ENCODE measurements at regions of chr9 and their contacts with region 1.

Region 1: DNA sequence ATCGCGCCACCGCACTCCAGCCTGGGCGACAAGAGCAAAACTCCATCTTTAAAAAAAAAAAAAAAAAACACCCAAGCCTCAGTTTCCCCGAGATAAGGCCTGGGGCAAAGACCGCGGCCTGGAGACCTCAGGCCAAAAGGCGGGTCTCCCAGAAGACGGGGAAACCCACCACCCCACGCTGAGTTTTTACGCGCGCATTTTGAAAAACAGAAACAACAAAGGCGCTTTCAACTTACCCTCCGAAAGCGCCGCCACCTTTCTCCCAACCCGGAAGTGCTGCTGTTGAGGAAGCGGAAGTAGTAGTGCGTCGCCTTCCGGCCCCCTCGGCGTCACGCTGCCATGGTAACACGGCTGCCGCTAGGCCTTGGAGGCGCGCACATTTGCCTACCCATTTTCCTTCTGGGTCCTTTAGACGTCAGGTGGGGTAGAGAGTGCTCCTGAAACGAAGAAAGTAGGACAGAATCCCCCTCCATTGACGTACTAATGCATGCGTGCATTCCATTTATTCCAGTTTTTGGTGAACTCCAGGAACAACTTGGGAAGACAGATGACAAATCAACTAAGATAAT is at the start of gene TTF1:
- DNase-seq: peak; percentile 97
- ATAC-seq: peak; percentile 79
- H3K4me3 Mint-ChIP-seq: peak within 1 kb of the TSS; percentile 96
- H3K27ac Mint-ChIP-seq: peak within 1 kb of the TSS; percentile 91
- H3K4me1 Mint-ChIP-seq: peaks cover 56% of the 10 kb centered on the region
- H3K27me3 Mint-ChIP-seq: peaks cover 9% of the 10 kb centered on the region
- total RNA-seq, gene TTF1: 31.9 to 33.4 TPM

Region 2: DNA sequence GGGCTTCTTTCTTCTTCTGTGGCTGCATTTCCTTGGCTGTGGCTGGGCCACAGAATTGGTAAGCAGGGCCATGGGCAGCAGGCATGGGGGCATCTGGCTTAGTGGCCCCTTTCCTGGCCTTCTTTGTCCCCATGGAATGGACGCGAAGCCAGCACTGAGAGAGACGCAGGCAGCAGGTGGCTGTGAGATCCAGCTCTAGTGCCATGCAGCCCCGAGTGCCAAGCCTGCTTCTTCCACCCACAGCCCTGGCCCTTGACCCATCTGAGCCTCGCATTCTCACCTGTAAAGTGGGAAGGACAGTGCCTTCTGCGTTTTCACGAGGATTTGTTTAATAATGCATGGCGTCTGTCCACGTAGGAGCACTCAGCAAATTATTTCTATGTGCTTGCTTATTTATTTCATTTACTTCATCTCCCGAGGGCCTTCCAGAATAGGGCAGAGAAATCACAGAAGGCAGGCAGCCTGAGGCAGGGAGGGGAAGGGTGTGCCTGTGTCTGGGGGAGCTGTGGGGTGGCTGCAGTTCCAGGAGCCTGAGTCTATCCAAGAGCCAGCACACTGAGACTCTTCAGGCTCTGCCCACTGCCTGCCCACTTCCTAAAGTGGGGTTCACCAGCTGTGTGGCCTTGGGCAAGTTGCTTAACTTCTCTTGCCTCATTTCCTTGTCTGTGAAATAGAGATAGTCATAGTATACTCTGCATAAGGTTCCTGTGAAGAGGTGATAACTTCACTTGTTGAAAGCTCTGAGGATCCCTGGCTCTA is 189.6 kb before region 1 on chr9:
- CTCF ChIA-PET with region 1: no interaction called
- POLR2A ChIA-PET with region 1: no interaction called
- intact Hi-C with region 1: no loop called
- DNase-seq: no peak
- ATAC-seq: no peak
- H3K4me3 Mint-ChIP-seq: no peak overlapping the region
- H3K27ac Mint-ChIP-seq: no peak overlapping the region
- H3K4me1 Mint-ChIP-seq: no peaks in the 10 kb centered on the region
- H3K27me3 Mint-ChIP-seq: no peaks in the 10 kb centered on the region

Region 3: GRCh38 chr9:132486706-132487350 is 80.2 kb after region 1 on chr9:
- CTCF ChIA-PET with region 1: interaction called, 3 read pairs
- POLR2A ChIA-PET with region 1: no interaction called
- intact Hi-C with region 1: loop called (anchors 1 to 5 kb)
- DNase-seq: peak; percentile 76
- ATAC-seq: peak; percentile 94
- H3K4me3 Mint-ChIP-seq: peak overlapping the region; percentile 33
- H3K27ac Mint-ChIP-seq: no peak overlapping the region
- H3K4me1 Mint-ChIP-seq: peaks cover 24% of the 10 kb centered on the region
- H3K27me3 Mint-ChIP-seq: peaks cover 52% of the 10 kb centered on the region

Region 4: GRCh38 chr9:132575005-132575609 is 168.5 kb after region 1 on chr9:
- CTCF ChIA-PET with region 1: interaction called, 5 read pairs
- POLR2A ChIA-PET with region 1: no interaction called
- intact Hi-C with region 1: loop called (anchors 1 to 2 kb)
- DNase-seq: peak; percentile 80
- ATAC-seq: peak; percentile 86
- H3K4me3 Mint-ChIP-seq: no peak overlapping the region
- H3K27ac Mint-ChIP-seq: no peak overlapping the region
- H3K4me1 Mint-ChIP-seq: no peaks in the 10 kb centered on the region
- H3K27me3 Mint-ChIP-seq: peaks cover 51% of the 10 kb centered on the region

Region 5: GRCh38 chr9:132651254-132651653 is 244.6 kb after region 1 on chr9:
- CTCF ChIA-PET with region 1: interaction called, 5 read pairs
- POLR2A ChIA-PET with region 1: no interaction called
- intact Hi-C with region 1: loop called in 1 of 2 experiments (anchors 5 kb)
- DNase-seq: peak; percentile 18
- ATAC-seq: no peak
- H3K4me3 Mint-ChIP-seq: no peak overlapping the region
- H3K27ac Mint-ChIP-seq: no peak overlapping the region
- H3K4me1 Mint-ChIP-seq: peaks cover 10% of the 10 kb centered on the region
- H3K27me3 Mint-ChIP-seq: no peaks in the 10 kb centered on the region

Region 6: DNA sequence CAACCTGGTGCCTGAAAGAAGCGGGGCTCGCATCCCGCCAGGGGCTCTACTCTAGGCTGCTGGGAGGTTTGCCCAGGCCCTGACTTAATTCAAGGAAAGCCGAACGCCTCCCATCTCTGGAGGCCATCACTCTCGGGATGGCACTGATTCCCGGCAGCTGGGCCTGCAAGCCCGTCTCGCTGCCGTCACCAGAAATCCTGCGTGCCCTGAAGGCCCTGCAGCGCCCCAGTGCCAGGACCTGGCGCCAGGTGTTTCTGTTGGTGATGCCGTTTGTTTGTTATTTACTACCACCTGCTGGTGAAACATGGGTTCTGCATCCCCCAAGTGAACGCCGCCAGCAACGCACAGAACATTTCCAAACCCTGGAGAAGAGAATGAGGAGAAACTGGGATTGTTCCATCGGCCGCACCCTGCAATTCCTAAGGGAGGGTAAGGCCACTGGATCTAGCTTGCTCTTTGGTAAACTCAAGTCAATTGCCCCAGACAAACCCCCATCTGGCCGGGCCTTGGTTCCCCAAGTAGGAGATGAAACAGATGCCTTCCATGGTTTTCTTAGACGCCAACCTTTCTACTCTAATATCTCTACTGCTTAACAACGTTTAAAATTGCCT is 393.5 kb after region 1 on chr9:
- CTCF ChIA-PET with region 1: no interaction called
- POLR2A ChIA-PET with region 1: no interaction called
- intact Hi-C with region 1: loop called (anchors 1 to 5 kb)
- DNase-seq: peak; percentile 77
- ATAC-seq: peak; percentile 87
- H3K4me3 Mint-ChIP-seq: no peak overlapping the region
- H3K27ac Mint-ChIP-seq: no peak overlapping the region
- H3K4me1 Mint-ChIP-seq: no peaks in the 10 kb centered on the region
- H3K27me3 Mint-ChIP-seq: peaks cover 9% of the 10 kb centered on the region

Region 7: GRCh38 chr9:132973713-132974112 is 567.1 kb after region 1 on chr9:
- CTCF ChIA-PET with region 1: no interaction called
- POLR2A ChIA-PET with region 1: no interaction called
- intact Hi-C with region 1: loop called (anchors 2 to 10 kb)
- DNase-seq: peak; percentile 51
- ATAC-seq: peak; percentile 64
- H3K4me3 Mint-ChIP-seq: no peak overlapping the region
- H3K27ac Mint-ChIP-seq: no peak overlapping the region
- H3K4me1 Mint-ChIP-seq: peaks cover 4% of the 10 kb centered on the region
- H3K27me3 Mint-ChIP-seq: peaks cover 18% of the 10 kb centered on the region

Measured in activated CD4-positive, alpha-beta T cell treated with anti-CD3 and anti-CD28 coated beads for 36 hours (primary cell).